ENCODE measurements at regions of chr12 and their contacts with region 1.

Region 1: GRCh38 chr12:779745-780734 is 27.7 kb downstream of the WNK1 start:
- DNase-seq: no peak
- H3K4me3 Mint-ChIP-seq: peak overlapping the region; percentile 62
- H3K27ac Mint-ChIP-seq: peak overlapping the region; percentile 47
- H3K4me1 Mint-ChIP-seq: peaks cover 72% of the 10 kb centered on the region
- H3K27me3 Mint-ChIP-seq: no peaks in the 10 kb centered on the region

Region 2: GRCh38 chr12:795305-795704 is 15.3 kb after region 1 on chr12:
- CTCF ChIA-PET with region 1: interaction called, 3 read pairs
- POLR2A ChIA-PET with region 1: interaction called, 6 read pairs
- intact Hi-C with region 1: loop called (anchors 2 kb)
- DNase-seq: peak; percentile 85
- H3K4me3 Mint-ChIP-seq: peak overlapping the region; percentile 35
- H3K27ac Mint-ChIP-seq: peak overlapping the region; percentile 79
- H3K4me1 Mint-ChIP-seq: peaks cover 81% of the 10 kb centered on the region
- H3K27me3 Mint-ChIP-seq: no peaks in the 10 kb centered on the region

Region 3: DNA sequence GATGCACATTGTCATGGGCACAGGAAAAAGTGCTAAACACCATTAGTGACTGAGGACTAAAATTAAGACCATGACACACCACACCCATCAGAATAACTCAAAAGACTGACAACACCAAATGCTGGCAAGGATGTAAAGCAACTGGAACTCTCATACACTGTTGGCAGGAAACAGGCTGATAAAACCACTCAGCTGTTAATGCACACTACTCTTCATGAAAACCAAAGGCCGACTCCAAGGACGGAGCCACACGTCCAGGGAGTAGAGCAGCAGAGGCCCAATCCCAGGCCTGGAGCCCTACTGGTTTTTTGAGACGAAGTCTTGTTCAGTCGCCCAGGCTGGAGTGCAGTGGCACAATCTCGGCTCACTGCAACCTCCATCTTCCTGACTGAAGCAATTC is 163.0 kb after region 1 on chr12:
- CTCF ChIA-PET with region 1: no interaction called
- POLR2A ChIA-PET with region 1: no interaction called
- intact Hi-C with region 1: no loop called
- DNase-seq: no peak
- H3K4me3 Mint-ChIP-seq: no peak overlapping the region
- H3K27ac Mint-ChIP-seq: no peak overlapping the region
- H3K4me1 Mint-ChIP-seq: peaks cover 29% of the 10 kb centered on the region
- H3K27me3 Mint-ChIP-seq: no peaks in the 10 kb centered on the region